Mucosa of descending colon (tissue), 3 donors: ENCODE measurements at regions of chr7 and their contacts with region 1.

Region 1: GRCh38 chr7:95686109-95686508 is 86.2 kb upstream of the DYNC1I1 start:
- DNase-seq: peak in 2 of 3 donors; percentile 33 to 69
- ATAC-seq: peak; percentile 79
- H3K4me3 ChIP-seq: no peak overlapping the region
- H3K4me1 ChIP-seq: no peaks in the 10 kb centered on the region
- CTCF ChIP-seq: no peak

Region 2: GRCh38 chr7:95511716-95512260 is 174.3 kb before region 1 on chr7:
- intact Hi-C with region 1: loop called (anchors 5 kb)
- DNase-seq: peak in 2 of 3 donors; percentile 26 to 92
- ATAC-seq: peak; percentile 89
- H3K4me3 ChIP-seq: no peak overlapping the region
- H3K4me1 ChIP-seq: no peaks in the 10 kb centered on the region
- CTCF ChIP-seq: peak; percentile 71

Region 3: DNA sequence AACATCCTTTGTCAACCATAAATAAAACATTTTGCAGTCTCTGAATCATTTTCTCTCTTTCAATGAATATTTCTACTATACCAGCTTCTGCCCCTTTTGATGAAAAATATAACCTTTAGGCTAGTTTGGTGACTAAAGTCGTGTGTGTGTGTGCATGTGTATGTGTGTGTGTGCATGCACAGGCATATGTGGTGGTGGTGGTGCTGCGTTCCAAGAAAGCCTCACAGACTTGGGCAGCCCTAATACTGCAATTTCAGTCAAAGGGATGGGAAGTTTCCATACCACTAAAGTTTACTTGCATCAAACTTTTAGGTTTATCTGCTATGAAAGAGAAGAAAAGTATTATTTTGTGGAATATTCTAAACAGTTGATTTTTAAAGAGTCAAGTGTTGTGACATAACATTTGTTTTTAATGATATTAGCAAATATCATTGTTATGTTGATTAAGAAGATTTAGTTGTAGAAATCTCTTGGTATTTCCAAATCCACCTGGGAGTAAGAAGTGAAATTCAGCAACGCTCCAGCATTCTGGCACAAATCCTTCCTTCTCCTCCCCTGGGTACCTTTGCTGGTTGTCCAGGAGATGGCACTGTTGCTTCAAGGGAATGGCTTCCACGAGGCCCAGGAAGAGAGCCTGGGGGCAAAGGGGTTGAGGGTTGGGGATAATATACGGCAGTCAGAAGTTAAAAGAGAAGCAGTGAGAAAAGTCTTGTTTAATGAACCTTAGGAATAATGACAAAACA is 158.9 kb before region 1 on chr7:
- intact Hi-C with region 1: loop called (anchors 5 kb)
- DNase-seq: peak in 1 of 3 donors; percentile 55
- ATAC-seq: peak; percentile 85
- H3K4me3 ChIP-seq: no peak overlapping the region
- H3K4me1 ChIP-seq: peaks cover 3% of the 10 kb centered on the region
- CTCF ChIP-seq: peak; percentile 77

Region 4: GRCh38 chr7:95794917-95795515 is 108.9 kb after region 1 on chr7:
- intact Hi-C with region 1: no loop called
- DNase-seq: peak in 1 of 3 donors; percentile 12
- ATAC-seq: peak; percentile 55
- H3K4me3 ChIP-seq: no peak overlapping the region
- H3K4me1 ChIP-seq: no peaks in the 10 kb centered on the region
- CTCF ChIP-seq: peak; percentile 9